RWPE1 (cell line): ENCODE measurements at regions of chr9 and their contacts with region 1.

Region 1: GRCh38 chr9:95005278-95006203 is 279.0 kb downstream of the AOPEP start:
- DNase-seq: peak; percentile 46
- H3K27ac ChIP-seq: peak overlapping the region; percentile 99
- CTCF ChIP-seq: no peak

Region 2: DNA sequence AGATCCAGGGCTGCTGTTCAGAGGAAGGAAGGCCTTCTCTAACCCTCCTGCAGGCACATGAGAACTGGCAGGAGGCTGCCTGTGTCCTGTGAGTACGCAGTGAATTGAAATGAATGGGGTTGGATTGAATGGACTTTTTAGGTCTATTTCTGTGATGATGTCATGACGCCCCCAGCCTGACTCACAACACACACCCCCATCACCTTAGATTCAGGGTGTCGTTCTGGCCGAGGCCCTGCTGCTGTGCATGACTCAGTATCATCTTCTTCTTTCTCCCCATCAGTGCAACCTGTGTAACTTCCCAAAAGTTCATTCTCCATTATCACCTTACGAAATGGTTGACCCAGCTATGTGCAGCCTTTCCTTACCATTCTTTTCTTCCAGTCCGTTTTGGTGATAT is 445.3 kb before region 1 on chr9:
- CTCF ChIA-PET with region 1: no interaction called
- POLR2A ChIA-PET with region 1: no interaction called
- DNase-seq: no peak
- H3K27ac ChIP-seq: no peak overlapping the region
- CTCF ChIP-seq: no peak

Region 3: GRCh38 chr9:94783102-94783664 is 222.4 kb before region 1 on chr9:
- CTCF ChIA-PET with region 1: interaction called, 13 read pairs
- POLR2A ChIA-PET with region 1: no interaction called
- DNase-seq: peak; percentile 93
- H3K27ac ChIP-seq: peak overlapping the region; percentile 61
- CTCF ChIP-seq: peak; percentile 94

Region 4: GRCh38 chr9:94920398-94921091 is 85.0 kb before region 1 on chr9:
- CTCF ChIA-PET with region 1: no interaction called
- POLR2A ChIA-PET with region 1: no interaction called
- DNase-seq: no peak
- H3K27ac ChIP-seq: peak overlapping the region; percentile 96
- CTCF ChIP-seq: no peak

Region 5: GRCh38 chr9:95031711-95032461 is 26.3 kb after region 1 on chr9:
- CTCF ChIA-PET with region 1: no interaction called
- POLR2A ChIA-PET with region 1: no interaction called
- DNase-seq: no peak
- H3K27ac ChIP-seq: peak overlapping the region; percentile 61
- CTCF ChIP-seq: no peak

Region 6: DNA sequence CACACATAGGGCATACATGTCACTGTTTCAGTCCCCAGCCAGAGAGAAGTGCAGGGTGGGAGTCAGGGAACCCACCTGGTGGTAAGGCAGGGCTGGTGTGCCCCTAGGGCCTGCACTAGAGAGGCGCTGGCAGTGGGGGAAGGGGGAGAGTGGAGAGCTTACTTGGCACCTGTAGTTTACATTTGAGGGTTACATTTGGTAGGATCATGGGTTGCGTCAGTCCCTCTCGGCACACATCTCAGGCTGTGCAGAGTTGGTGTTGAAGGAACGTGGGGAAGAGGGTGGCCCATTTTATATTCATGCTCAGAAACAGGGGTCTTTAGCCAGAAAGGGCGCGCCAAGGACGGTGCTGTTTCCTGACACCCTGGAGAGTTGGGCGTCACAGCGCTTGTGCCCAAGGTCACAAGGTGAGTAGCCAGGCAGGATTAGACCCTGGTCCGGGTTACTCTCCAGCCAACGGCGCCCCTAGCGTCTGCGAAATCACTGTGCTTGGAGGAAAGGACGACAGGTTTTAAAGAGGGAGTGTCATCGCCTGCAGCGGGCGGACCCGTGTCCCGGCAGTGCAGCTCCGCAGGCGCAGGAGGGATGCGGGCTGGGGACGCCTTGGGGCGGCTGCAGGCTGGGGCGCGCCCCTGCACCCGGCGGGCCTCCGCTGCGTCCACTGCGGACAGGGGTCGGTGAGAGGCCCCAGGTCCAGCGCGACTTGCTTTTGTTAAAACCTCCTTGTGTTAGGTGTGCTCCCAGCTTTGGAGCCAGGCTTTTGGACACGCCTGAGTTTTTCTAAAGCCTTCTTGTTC is 39.4 kb after region 1 on chr9:
- CTCF ChIA-PET with region 1: interaction called, 10 read pairs
- POLR2A ChIA-PET with region 1: no interaction called
- DNase-seq: peak; percentile 85
- H3K27ac ChIP-seq: peak overlapping the region; percentile 91
- CTCF ChIP-seq: peak; percentile 96

Region 7: GRCh38 chr9:95092262-95093072 is 86.9 kb after region 1 on chr9:
- CTCF ChIA-PET with region 1: no interaction called
- POLR2A ChIA-PET with region 1: no interaction called
- DNase-seq: peak; percentile 81
- H3K27ac ChIP-seq: peak overlapping the region; percentile 98
- CTCF ChIP-seq: no peak